H1 (cell line): ENCODE measurements at regions of chr7 and their contacts with region 1.

Region 1: DNA sequence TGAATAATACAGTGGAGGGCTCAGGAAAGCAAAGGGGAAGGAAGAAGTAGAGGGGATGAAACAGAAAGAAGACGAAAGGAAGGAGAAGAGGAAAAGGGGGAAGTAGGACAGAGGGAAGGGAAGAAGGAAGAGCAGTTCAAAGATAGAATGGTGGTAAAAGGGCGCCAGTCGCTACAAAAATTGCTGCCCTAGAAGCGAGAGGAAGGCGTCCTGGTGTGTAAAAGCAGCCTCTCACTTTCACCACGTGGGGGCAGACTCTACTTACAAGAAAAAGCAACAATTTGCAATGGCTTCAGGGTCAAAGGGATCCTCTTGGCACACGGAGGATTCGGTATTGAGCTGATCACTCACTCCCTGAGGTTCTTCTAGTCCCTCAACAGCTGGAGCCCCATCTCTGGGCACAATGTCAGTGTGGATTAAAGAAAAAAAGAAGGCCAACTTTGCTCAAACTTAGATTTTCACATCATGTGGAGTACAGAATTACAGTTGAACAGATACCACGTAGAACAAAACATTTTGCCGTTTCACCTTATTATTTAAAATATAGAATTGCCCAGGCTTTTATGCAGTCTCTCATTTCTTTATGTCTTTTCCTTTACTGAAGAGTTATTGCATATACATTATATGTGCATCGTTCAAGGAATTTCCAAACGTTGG is 31.4 kb upstream of the NPVF start:
- DNase-seq: peak; percentile 23 to 66
- H3K4me3 ChIP-seq: no peak overlapping the region
- H3K27ac ChIP-seq: no peak overlapping the region
- H3K4me1 ChIP-seq: no peaks in the 10 kb centered on the region
- H3K27me3 ChIP-seq: no peaks in the 10 kb centered on the region; a peak in 1 of 7 replicates
- CTCF ChIP-seq: peak; percentile 55 to 94 (median 93)
- EP300 ChIP-seq: no peak
- POLR2A ChIP-seq: no peak
- RAD21 ChIP-seq: peak; percentile 97 to 99

Region 2: DNA sequence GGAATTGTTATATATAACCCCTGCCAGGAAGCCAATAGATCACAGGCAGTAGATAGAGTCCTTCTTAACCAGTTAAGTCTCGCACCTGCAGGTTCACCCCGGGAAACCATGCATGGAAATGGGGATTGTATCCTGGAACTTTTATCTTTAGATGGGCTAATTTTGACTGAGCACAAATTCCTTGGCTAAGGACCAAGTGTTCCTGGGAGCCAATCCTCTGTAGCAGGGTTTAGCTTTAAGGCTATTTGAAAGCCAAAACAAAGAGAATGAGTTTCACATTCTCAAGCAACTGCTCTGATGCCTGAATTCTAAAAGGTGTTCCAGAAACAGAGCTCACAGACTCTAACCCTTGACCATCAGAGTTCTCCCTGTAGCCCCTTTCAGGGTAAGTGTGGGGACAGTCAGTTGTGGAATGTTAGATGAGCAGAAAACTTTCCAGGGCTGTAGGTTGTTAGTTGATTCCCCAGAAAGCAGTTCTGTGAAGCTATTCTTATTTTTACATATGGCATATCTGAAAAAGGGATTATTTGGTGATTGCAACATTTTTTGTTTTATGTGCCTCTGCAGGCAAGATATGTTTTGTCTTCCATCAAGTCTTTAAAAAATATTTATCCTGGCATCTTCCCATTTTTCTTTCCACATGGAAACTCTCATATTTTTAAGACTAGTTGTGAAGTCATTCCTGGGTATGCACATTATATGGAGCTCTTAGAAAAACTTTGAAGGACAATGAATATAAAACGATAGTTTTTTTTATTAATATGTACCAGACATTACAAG is 15.3 kb before region 1 on chr7:
- CTCF ChIA-PET with region 1: interaction called, 19 read pairs
- POLR2A ChIA-PET with region 1: interaction called, 3 read pairs
- DNase-seq: peak in 1 of 2 experiments; percentile 17
- H3K4me3 ChIP-seq: no peak overlapping the region
- H3K27ac ChIP-seq: no peak overlapping the region
- H3K4me1 ChIP-seq: peaks cover 0 to 5% (median 2%) of the 10 kb centered on the region in 4 experiments; a peak in 4 of 7 replicates
- H3K27me3 ChIP-seq: peaks cover 0 to 9% (median 4%) of the 10 kb centered on the region in 4 experiments; a peak in 4 of 7 replicates
- CTCF ChIP-seq: no peak
- EP300 ChIP-seq: no peak
- POLR2A ChIP-seq: no peak
- RAD21 ChIP-seq: no peak

Region 3: DNA sequence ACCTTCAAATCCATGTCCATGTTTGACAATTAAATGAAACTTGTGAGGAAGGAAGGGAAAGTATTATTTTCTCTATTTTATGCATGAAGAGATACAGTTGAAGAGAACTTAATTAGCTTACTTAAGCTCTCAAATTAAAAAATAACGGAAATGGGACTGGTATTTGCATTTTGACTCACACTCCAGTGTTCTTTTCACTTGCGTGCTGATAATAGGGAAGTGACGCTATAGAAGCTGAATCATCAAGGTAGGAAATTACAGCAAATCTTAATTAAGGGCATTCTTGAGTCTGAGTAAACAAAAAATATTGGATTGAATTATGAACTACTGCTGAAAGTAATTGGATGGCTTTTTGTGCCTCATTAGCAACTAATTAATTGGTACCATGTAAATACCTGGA is 12.6 kb after region 1 on chr7:
- CTCF ChIA-PET with region 1: interaction called, 11 read pairs
- POLR2A ChIA-PET with region 1: no interaction called
- DNase-seq: no peak
- H3K4me3 ChIP-seq: no peak overlapping the region
- H3K27ac ChIP-seq: no peak overlapping the region
- H3K4me1 ChIP-seq: no peaks in the 10 kb centered on the region
- H3K27me3 ChIP-seq: no peaks in the 10 kb centered on the region
- CTCF ChIP-seq: no peak
- EP300 ChIP-seq: no peak
- POLR2A ChIP-seq: no peak
- RAD21 ChIP-seq: no peak

Region 4: GRCh38 chr7:25314731-25315267 is 55.1 kb after region 1 on chr7:
- CTCF ChIA-PET with region 1: interaction called, 10 read pairs
- POLR2A ChIA-PET with region 1: no interaction called
- DNase-seq: no peak
- H3K4me3 ChIP-seq: no peak overlapping the region
- H3K27ac ChIP-seq: no peak overlapping the region
- H3K4me1 ChIP-seq: no peaks in the 10 kb centered on the region
- H3K27me3 ChIP-seq: no peaks in the 10 kb centered on the region
- CTCF ChIP-seq: no peak
- EP300 ChIP-seq: no peak
- POLR2A ChIP-seq: no peak
- RAD21 ChIP-seq: no peak

Region 5: GRCh38 chr7:25399000-25399750 is 139.5 kb after region 1 on chr7:
- CTCF ChIA-PET with region 1: interaction called, 158 read pairs
- POLR2A ChIA-PET with region 1: no interaction called
- DNase-seq: no peak
- H3K4me3 ChIP-seq: no peak overlapping the region
- H3K27ac ChIP-seq: no peak overlapping the region
- H3K4me1 ChIP-seq: no peaks in the 10 kb centered on the region
- H3K27me3 ChIP-seq: no peaks in the 10 kb centered on the region
- CTCF ChIP-seq: no peak
- EP300 ChIP-seq: no peak
- POLR2A ChIP-seq: no peak
- RAD21 ChIP-seq: no peak

Region 6: DNA sequence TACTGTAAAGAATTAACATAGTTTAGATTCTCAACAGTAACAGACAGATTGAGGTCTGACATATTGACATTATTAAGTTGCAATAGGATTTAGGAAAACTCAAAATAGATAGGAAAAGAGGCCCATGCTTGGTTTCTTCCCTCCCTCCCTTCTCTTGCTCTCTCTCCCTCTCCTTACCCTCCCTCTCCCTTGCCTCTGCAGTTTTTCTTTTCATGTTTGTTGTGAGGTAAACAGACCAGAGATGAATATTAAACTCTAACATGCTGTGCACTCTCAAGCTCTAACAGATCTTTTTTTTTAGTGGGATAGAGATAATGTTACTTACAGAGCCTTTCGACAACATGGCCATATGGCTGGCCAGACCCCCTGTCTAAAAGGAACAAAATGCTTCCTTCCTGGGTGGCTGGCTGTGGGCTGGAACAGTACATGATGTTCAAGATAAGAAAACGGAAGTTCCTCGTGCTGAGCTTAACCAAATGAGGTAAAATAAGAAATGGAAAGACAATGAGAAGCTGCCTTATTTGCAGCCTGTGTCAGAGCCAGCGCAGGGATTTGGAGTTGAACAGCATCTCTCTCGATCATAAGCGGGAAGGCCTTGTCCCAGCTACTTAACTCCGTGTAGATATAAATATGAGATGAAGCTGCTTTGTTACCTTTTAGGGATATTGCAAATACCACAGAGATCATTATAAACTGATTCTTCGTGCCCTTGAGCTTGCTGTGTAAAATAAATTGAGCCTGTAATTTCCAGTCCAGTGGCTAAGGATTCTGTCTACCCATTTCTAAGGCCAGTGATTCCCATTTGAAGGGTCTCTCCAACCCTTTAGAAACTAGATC is 360.5 kb after region 1 on chr7:
- CTCF ChIA-PET with region 1: no interaction called
- POLR2A ChIA-PET with region 1: no interaction called
- DNase-seq: no peak
- H3K4me3 ChIP-seq: no peak overlapping the region
- H3K27ac ChIP-seq: no peak overlapping the region
- H3K4me1 ChIP-seq: no peaks in the 10 kb centered on the region
- H3K27me3 ChIP-seq: no peaks in the 10 kb centered on the region
- CTCF ChIP-seq: no peak
- EP300 ChIP-seq: no peak
- POLR2A ChIP-seq: no peak
- RAD21 ChIP-seq: no peak